SK-MEL-5 (cell line): ENCODE measurements at regions of chr5 and their contacts with region 1.

Region 1: GRCh38 chr5:14258840-14259239 is 115.7 kb downstream of the TRIO start:
- DNase-seq: no peak

Region 2: GRCh38 chr5:14223372-14223771 is 35.5 kb before region 1 on chr5:
- in situ Hi-C with region 1: loop called (anchors 5 kb)
- DNase-seq: peak; percentile 63